T-cell (primary cell): ENCODE measurements at regions of chr2 and their contacts with region 1.

Region 1: GRCh38 chr2:239858179-239858578 is 167.0 kb downstream of the NDUFA10 start:
- DNase-seq: no peak
- ATAC-seq: no peak
- H3K4me3 ChIP-seq: no peak overlapping the region
- H3K4me3 Mint-ChIP-seq: no peak overlapping the region
- H3K27ac ChIP-seq: no peak overlapping the region
- H3K27ac Mint-ChIP-seq: no peak overlapping the region
- H3K4me1 ChIP-seq: no peaks in the 10 kb centered on the region
- H3K4me1 Mint-ChIP-seq: peaks cover 20 to 27% (median 22%) of the 10 kb centered on the region in 3 donors
- H3K27me3 ChIP-seq: peaks cover 0 to 23% of the 10 kb centered on the region in 2 experiments
- H3K27me3 Mint-ChIP-seq: peaks cover 20 to 26% of the 10 kb centered on the region in 2 donors

Region 2: GRCh38 chr2:239275044-239275685 is 583.0 kb before region 1 on chr2:
- CTCF ChIA-PET with region 1: no interaction called
- POLR2A ChIA-PET with region 1: interaction called in 1 of 2 experiments, 15 read pairs
- DNase-seq: peak; percentile 55 to 92 (median 79)
- ATAC-seq: peak; percentile 95 to 96 (median 96)
- H3K4me3 ChIP-seq: peak overlapping the region in 1 of 2 donors; percentile 50
- H3K4me3 Mint-ChIP-seq: peak overlapping the region; percentile 70 to 81 (median 72)
- H3K27ac ChIP-seq: peak overlapping the region; percentile 85
- H3K27ac Mint-ChIP-seq: peak overlapping the region; percentile 87 to 88
- H3K4me1 ChIP-seq: peaks cover 22 to 54% of the 10 kb centered on the region in 2 experiments
- H3K4me1 Mint-ChIP-seq: peaks cover 58 to 78% (median 78%) of the 10 kb centered on the region in 3 donors
- H3K27me3 ChIP-seq: peaks cover 0 to 4% of the 10 kb centered on the region in 2 experiments
- H3K27me3 Mint-ChIP-seq: no peaks in the 10 kb centered on the region

Region 3: DNA sequence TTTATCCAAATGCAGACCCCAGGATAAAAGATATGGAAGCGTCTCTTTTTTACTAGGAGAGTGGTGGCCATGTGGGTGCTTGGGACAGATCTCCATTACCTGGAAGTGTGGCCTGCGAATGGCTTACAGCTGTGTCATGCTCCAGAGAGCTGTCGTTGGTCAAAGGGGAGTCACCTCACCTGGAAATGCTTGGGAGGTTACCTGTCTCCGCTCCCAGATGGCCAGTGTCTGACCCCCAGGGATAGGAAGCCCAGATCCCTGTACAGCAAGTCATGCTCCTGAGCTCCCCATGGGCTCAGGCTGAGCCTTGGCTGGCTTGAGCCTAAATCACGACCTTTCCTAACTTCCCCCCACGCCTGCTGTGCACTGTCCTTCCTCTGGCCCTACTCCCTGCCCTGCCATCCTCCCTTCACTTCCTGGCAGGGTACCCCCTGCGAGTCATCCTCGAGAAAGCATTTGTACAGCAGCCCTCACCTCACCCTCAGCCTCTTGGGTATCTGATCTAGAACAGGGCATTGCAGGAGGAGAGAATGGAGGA is 448.3 kb before region 1 on chr2:
- CTCF ChIA-PET with region 1: no interaction called
- POLR2A ChIA-PET with region 1: interaction called in 1 of 2 experiments, 13 read pairs
- DNase-seq: peak in 1 of 35 experiments; percentile 15
- ATAC-seq: no peak
- H3K4me3 ChIP-seq: no peak overlapping the region
- H3K4me3 Mint-ChIP-seq: no peak overlapping the region
- H3K27ac ChIP-seq: no peak overlapping the region
- H3K27ac Mint-ChIP-seq: no peak overlapping the region
- H3K4me1 ChIP-seq: peaks cover 5 to 25% of the 10 kb centered on the region in 2 experiments
- H3K4me1 Mint-ChIP-seq: peaks cover 19 to 28% (median 22%) of the 10 kb centered on the region in 3 donors
- H3K27me3 ChIP-seq: peaks cover 0 to 16% of the 10 kb centered on the region in 2 experiments
- H3K27me3 Mint-ChIP-seq: peaks cover 0 to 2% of the 10 kb centered on the region in 2 donors

Region 4: DNA sequence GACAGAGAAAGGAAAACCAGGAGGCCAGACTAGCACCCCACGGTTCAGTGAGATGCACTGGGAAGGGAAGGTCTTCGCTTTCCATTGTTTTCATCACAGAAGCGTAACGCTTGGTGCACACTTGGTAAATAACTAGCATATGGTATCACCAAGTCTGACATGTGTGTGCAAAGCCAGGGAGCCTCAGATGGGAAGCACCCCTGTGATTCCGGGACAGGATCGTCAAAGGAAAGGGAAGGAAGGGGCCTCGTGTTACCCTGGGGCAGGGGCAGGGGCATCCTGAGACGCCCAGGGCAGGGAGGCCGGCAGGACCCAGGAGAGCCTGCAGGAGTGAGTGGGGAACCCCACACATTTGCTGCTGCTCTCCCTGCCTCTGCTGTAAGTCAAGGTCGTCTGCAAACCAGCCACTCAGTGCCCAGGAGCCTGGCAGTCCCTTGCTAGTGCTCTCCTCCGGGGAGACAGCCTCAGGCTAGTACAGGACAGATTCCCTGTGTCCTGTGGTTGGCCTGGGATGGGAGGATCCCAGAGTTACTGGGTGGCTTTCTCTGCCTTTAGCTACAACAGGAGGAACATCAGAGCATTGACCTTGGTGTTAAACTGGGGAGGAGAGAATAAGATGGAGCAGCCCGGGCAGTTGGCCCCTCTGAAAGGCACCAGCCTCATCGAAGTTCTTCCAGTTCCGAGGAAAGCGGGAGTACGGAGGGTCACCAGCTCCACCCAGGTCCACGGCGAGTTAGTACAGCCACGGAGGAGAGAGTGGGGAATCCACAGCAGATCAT is 25.5 kb before region 1 on chr2:
- CTCF ChIA-PET with region 1: no interaction called
- POLR2A ChIA-PET with region 1: no interaction called
- DNase-seq: no peak
- ATAC-seq: no peak
- H3K4me3 ChIP-seq: no peak overlapping the region
- H3K4me3 Mint-ChIP-seq: no peak overlapping the region
- H3K27ac ChIP-seq: no peak overlapping the region
- H3K27ac Mint-ChIP-seq: no peak overlapping the region
- H3K4me1 ChIP-seq: no peaks in the 10 kb centered on the region
- H3K4me1 Mint-ChIP-seq: no peaks in the 10 kb centered on the region
- H3K27me3 ChIP-seq: peaks cover 0 to 12% of the 10 kb centered on the region in 2 experiments
- H3K27me3 Mint-ChIP-seq: peaks cover 0 to 9% of the 10 kb centered on the region in 2 donors